Dorsolateral prefrontal cortex (tissue), 120 donors: ENCODE measurements at regions of chr13 and their contacts with region 1.

Region 1: GRCh38 chr13:76903544-76904162 is 17.4 kb upstream of the KCTD12 start:
- DNase-seq: peak in 7 of 10 donors; percentile 52 to 77 (median 59)
- H3K4me3 ChIP-seq: no peak overlapping the region
- H3K27ac ChIP-seq: no peak overlapping the region
- H3K27me3 ChIP-seq: peaks cover 0 to 4% (median 0%) of the 10 kb centered on the region in 45 donors
- CTCF ChIP-seq: peak; percentile 90 to 100 (median 97)

Region 2: GRCh38 chr13:75691183-75691582 is 1212.5 kb before region 1 on chr13:
- intact Hi-C with region 1: loop called (anchors 5 kb)
- DNase-seq: no peak
- H3K4me3 ChIP-seq: no peak overlapping the region
- H3K27ac ChIP-seq: no peak overlapping the region
- H3K27me3 ChIP-seq: no peaks in the 10 kb centered on the region
- CTCF ChIP-seq: no peak